Sciatic nerve (tissue), 2 donors: ENCODE measurements at regions of chr3 and their contacts with region 1.

Region 1: GRCh38 chr3:173416070-173416469 is 18.5 kb downstream of the NLGN1 start:
- DNase-seq: no peak
- ATAC-seq: no peak

Region 2: DNA sequence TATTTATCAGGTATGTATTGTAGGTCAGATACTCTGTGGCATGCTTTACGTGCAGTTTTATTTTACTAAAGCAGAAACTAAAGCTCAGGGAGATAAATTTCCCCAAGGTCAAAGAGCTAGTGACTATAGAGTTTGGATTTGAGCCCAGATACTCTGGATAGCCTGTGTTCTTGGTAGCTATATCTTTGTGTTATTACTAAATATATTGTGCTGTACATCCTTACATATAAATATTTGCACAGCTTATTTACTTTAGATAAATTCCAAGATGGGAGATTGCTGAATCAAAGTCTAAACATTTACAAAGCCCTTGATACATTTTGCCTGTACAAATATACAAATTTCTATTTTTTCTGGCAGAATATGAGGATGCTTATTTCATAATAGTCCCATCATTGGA is 782.1 kb after region 1 on chr3:
- intact Hi-C with region 1: loop called (anchors 5 kb)
- DNase-seq: no peak
- ATAC-seq: no peak